Activated B cell treated with CpG ODN at 0.5 μM for 24 hours (primary cell): ENCODE measurements at regions of chr1 and their contacts with region 1.

Region 1: GRCh38 chr1:108601708-108602410 is 42.0 kb downstream of the EEIG2 start:
- DNase-seq: no peak
- ATAC-seq: no peak
- H3K4me3 Mint-ChIP-seq: no peak overlapping the region
- H3K27ac Mint-ChIP-seq: no peak overlapping the region
- H3K4me1 Mint-ChIP-seq: no peaks in the 10 kb centered on the region
- H3K27me3 Mint-ChIP-seq: no peaks in the 10 kb centered on the region
- CTCF ChIP-seq: no peak

Region 2: DNA sequence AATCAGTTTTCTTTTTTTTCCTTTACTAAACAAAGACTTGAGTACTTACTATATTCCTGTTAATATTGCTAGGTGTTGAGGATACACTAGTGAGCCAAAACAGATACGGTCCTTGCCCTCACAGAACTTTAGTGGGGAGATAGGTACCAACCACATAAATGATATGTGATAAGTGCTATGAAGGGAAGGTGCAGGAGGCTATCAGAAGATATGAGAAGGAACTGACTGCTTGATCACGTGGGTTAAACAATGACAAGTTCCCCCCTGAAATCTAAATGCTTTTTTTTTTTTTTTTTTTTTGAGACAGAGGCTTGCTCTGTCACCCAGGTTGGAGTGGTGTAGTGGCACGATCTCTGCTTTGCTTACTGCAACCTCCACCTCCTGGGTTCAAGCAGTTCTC is 1762.4 kb after region 1 on chr1:
- CTCF ChIA-PET with region 1: no interaction called
- POLR2A ChIA-PET with region 1: interaction called, 15 read pairs
- intact Hi-C with region 1: no loop called
- DNase-seq: no peak
- ATAC-seq: no peak
- H3K4me3 Mint-ChIP-seq: no peak overlapping the region
- H3K27ac Mint-ChIP-seq: no peak overlapping the region
- H3K4me1 Mint-ChIP-seq: no peaks in the 10 kb centered on the region
- H3K27me3 Mint-ChIP-seq: no peaks in the 10 kb centered on the region
- CTCF ChIP-seq: no peak